ENCODE measurements at regions of chr6 and their contacts with region 1.

Region 1: GRCh38 chr6:26596579-26597388 is at the start of gene ABT1:
- DNase-seq: peak; percentile 100
- H3K4me3 ChIP-seq: peak within 1 kb of the TSS; percentile 76 to 97 (median 93)
- H3K27ac ChIP-seq: peak within 1 kb of the TSS; percentile 89 to 92 (median 90)
- H3K4me1 ChIP-seq: peaks cover 13 to 30% (median 26%) of the 10 kb centered on the region in 4 donors
- H3K27me3 ChIP-seq: peaks cover 0 to 32% (median 21%) of the 10 kb centered on the region in 4 donors
- CTCF ChIP-seq: peak in 1 of 3 experiments; percentile 19
- EP300 ChIP-seq: no peak
- POLR2A ChIP-seq: peak; percentile 21
- total RNA-seq, gene ABT1: 13.3 to 18.2 (median 16.1) TPM

Region 2: DNA sequence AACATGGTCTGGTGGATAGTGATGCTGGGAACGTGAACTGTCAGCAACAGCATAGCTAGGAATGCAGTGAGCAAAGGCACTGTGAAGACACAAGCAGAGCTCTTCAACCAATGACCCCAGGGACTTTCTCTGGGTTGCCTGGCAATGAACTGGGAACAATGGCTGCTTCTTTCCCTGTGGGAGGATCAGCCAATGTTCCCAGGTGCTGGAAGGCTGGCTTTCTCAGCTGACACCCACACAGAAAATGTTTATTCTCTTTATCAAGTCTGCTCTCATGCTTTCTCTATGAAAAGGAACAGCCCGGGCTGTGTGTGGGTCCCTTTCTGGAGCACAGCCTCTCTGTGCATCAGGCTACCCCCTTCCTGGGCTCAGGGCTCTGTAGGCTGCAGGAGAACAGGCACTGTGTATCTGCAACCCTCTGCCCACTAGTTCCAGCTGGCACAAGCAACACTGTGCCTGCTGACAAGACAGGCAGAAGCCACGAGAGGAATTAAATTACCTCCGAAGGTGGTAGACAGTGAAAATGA is 455.3 kb before region 1 on chr6:
- intact Hi-C with region 1: no loop called
- DNase-seq: no peak
- H3K4me3 ChIP-seq: no peak overlapping the region
- H3K27ac ChIP-seq: no peak overlapping the region
- H3K4me1 ChIP-seq: no peaks in the 10 kb centered on the region
- H3K27me3 ChIP-seq: no peaks in the 10 kb centered on the region
- CTCF ChIP-seq: no peak
- EP300 ChIP-seq: no peak
- POLR2A ChIP-seq: no peak

Region 3: GRCh38 chr6:26175428-26176181 is 421.2 kb before region 1 on chr6:
- intact Hi-C with region 1: loop called (anchors 5 kb)
- DNase-seq: no peak
- H3K4me3 ChIP-seq: no peak overlapping the region
- H3K27ac ChIP-seq: peak overlapping the region in 3 of 4 donors; percentile 30 to 43 (median 32)
- H3K4me1 ChIP-seq: peaks cover 14 to 20% (median 16%) of the 10 kb centered on the region in 4 donors
- H3K27me3 ChIP-seq: no peaks in the 10 kb centered on the region
- CTCF ChIP-seq: peak; percentile 55 to 72 (median 64)
- EP300 ChIP-seq: no peak
- POLR2A ChIP-seq: no peak

Region 4: GRCh38 chr6:26216356-26216885 is 380.4 kb before region 1 on chr6:
- intact Hi-C with region 1: no loop called
- DNase-seq: peak; percentile 95
- H3K4me3 ChIP-seq: peak overlapping the region; percentile 55 to 62 (median 57)
- H3K27ac ChIP-seq: peak overlapping the region; percentile 89 to 96 (median 90)
- H3K4me1 ChIP-seq: peaks cover 17 to 33% (median 30%) of the 10 kb centered on the region in 4 donors
- H3K27me3 ChIP-seq: peaks cover 0 to 28% (median 0%) of the 10 kb centered on the region in 4 donors
- CTCF ChIP-seq: no peak
- EP300 ChIP-seq: no peak
- POLR2A ChIP-seq: peak; percentile 81

Region 5: GRCh38 chr6:26342106-26343004 is 254.4 kb before region 1 on chr6:
- intact Hi-C with region 1: loop called (anchors 2 kb)
- DNase-seq: no peak
- H3K4me3 ChIP-seq: peak overlapping the region in 2 of 4 donors; percentile 3 to 18
- H3K27ac ChIP-seq: no peak overlapping the region
- H3K4me1 ChIP-seq: peaks cover 0 to 8% (median 5%) of the 10 kb centered on the region in 4 donors
- H3K27me3 ChIP-seq: peaks cover 0 to 30% (median 3%) of the 10 kb centered on the region in 4 donors
- CTCF ChIP-seq: no peak
- EP300 ChIP-seq: no peak
- POLR2A ChIP-seq: no peak

Region 6: GRCh38 chr6:26568601-26569432 is 28.0 kb before region 1 on chr6:
- intact Hi-C with region 1: loop called (anchors 1 kb)
- DNase-seq: peak; percentile 100
- H3K4me3 ChIP-seq: peak overlapping the region; percentile 52 to 62 (median 58)
- H3K27ac ChIP-seq: peak overlapping the region; percentile 46 to 74 (median 62)
- H3K4me1 ChIP-seq: peaks cover 6 to 22% (median 20%) of the 10 kb centered on the region in 4 donors
- H3K27me3 ChIP-seq: no peaks in the 10 kb centered on the region
- CTCF ChIP-seq: peak; percentile 8 to 30 (median 12)
- EP300 ChIP-seq: no peak
- POLR2A ChIP-seq: no peak